Breast epithelium (tissue), 4 donors: ENCODE measurements at regions of chr6 and their contacts with region 1.

Region 1: GRCh38 chr6:113873043-113873667 is 16.0 kb downstream of the MARCKS start:
- DNase-seq: no peak
- H3K4me3 ChIP-seq: peak overlapping the region in 2 of 3 donors; percentile 19 to 42
- H3K27ac ChIP-seq: no peak overlapping the region
- H3K4me1 ChIP-seq: no peaks in the 10 kb centered on the region
- H3K27me3 ChIP-seq: no peaks in the 10 kb centered on the region
- CTCF ChIP-seq: no peak
- POLR2A ChIP-seq: no peak

Region 2: DNA sequence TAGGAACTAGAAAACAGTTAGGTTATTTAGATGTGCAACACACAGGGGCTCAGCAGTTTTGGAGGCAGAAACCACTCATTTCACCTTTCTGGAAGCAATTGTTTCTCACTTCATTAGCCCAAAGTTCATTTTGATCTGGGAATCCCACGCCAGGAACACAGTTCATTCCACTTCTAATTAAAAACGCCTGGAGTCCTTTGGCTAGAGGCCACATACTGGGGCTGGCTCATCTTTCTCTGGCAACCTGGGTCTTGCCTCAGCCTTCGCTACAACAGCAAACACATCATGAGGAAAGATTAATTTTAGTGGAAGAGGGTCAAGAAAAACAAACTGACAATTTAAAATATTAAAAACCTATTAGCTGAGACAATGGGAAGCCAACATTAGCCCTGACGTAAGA is 1456.3 kb before region 1 on chr6:
- intact Hi-C with region 1: loop called (anchors 5 kb)
- DNase-seq: peak in 1 of 2 donors; percentile 88
- H3K4me3 ChIP-seq: no peak overlapping the region
- H3K27ac ChIP-seq: peak overlapping the region; percentile 45 to 67
- H3K4me1 ChIP-seq: no peaks in the 10 kb centered on the region
- H3K27me3 ChIP-seq: no peaks in the 10 kb centered on the region
- CTCF ChIP-seq: no peak
- POLR2A ChIP-seq: no peak